AG04450 (cell line): ENCODE measurements at regions of chr16 and their contacts with region 1.

Region 1: GRCh38 chr16:55502801-55503366 is 6.0 kb upstream of the LPCAT2 start:
- DNase-seq: peak; percentile 91
- H3K4me3 ChIP-seq: 0 out of 2 replicates have a peak overlapping the region, but pooled peaks have one; percentile 7
- H3K27ac ChIP-seq: peak overlapping the region; percentile 47
- H3K27me3 ChIP-seq: no peaks in the 10 kb centered on the region
- CTCF ChIP-seq: peak; percentile 30

Region 2: GRCh38 chr16:55454861-55455260 is 48.0 kb before region 1 on chr16:
- CTCF ChIA-PET with region 1: no interaction called
- POLR2A ChIA-PET with region 1: no interaction called
- DNase-seq: no peak
- H3K4me3 ChIP-seq: no peak overlapping the region
- H3K27ac ChIP-seq: no peak overlapping the region
- H3K27me3 ChIP-seq: peaks cover 8% of the 10 kb centered on the region
- CTCF ChIP-seq: no peak

Region 3: DNA sequence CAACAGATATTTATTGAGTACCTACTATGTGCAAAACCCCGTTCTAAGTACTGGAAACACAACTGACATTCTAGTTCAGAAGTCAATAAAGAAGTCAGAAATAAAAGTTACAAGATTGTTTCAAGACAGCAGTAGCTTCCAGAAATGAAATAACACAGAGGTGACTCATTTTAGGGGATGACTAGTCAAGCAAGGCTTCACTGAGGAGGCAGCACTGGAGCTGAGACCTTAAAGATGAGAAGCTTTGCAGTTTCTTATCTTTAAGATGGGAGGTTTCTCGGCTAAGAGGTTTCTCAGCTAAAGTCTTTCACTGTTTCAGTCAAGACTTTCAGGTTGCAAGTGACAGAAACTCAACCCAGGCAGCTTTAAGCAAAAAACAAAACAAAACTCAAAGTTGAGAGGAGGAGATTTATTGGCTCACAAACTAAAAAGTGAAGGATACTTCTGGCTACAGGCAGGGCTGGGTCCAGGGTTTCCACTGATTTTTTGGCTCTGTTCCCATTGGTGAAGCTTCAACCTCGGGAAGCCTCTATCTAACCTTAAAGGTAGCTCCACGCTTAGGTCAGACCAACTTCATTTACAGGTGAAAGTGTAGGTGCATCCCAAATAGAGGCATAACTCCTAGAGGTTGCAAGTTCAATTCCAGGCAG is 31.3 kb before region 1 on chr16:
- CTCF ChIA-PET with region 1: interaction called, 24 read pairs
- POLR2A ChIA-PET with region 1: interaction called, 28 read pairs
- DNase-seq: peak; percentile 51
- H3K4me3 ChIP-seq: no peak overlapping the region
- H3K27ac ChIP-seq: peak overlapping the region; percentile 65
- H3K27me3 ChIP-seq: no peaks in the 10 kb centered on the region
- CTCF ChIP-seq: no peak

Region 4: GRCh38 chr16:55480228-55480661 is 22.6 kb before region 1 on chr16:
- CTCF ChIA-PET with region 1: interaction called, 24 read pairs
- POLR2A ChIA-PET with region 1: interaction called, 59 read pairs
- DNase-seq: peak; percentile 84
- H3K4me3 ChIP-seq: peak overlapping the region; percentile 94
- H3K27ac ChIP-seq: peak overlapping the region; percentile 87
- H3K27me3 ChIP-seq: no peaks in the 10 kb centered on the region
- CTCF ChIP-seq: no peak

Region 5: DNA sequence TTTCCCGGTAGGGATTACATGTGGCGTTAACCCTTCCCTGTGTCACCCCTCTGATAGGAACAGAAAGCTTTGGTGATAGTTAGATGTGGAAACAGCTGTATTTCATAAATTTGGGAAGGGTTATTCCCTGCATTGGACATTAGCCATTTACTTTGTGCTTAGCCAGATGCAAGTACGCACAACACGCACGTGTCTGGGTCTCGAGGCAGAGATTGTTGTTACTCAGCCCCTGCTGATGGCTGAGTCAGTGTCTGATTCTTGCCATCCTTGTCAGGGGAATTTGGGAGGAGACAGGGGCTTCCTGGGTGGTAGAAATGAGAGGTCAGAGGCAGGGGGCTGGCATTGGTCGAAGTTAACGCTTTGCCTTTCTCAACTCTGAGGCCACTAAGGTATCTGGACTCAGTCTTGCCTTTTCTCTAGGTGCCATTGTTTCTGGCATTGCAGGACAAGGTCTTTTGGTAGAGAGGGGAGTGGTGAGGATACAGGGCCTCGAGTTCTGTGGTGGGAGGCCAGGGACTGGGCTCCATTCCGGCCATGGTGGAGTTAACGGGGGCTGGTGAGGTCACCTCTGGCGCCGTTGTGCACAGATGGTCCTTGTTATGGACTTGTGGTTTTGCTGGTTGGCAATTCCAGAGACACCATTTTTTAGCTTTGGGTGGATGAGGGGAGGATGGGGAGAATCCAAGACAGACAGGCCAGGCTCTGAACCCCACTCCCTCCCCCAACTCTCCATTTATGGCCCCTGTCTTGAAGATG is 15.7 kb before region 1 on chr16:
- CTCF ChIA-PET with region 1: interaction called, 11 read pairs
- POLR2A ChIA-PET with region 1: interaction called, 32 read pairs
- DNase-seq: peak; percentile 76
- H3K4me3 ChIP-seq: no peak overlapping the region
- H3K27ac ChIP-seq: peak overlapping the region; percentile 96
- H3K27me3 ChIP-seq: no peaks in the 10 kb centered on the region
- CTCF ChIP-seq: no peak

Region 6: GRCh38 chr16:55543472-55543871 is 40.6 kb after region 1 on chr16:
- CTCF ChIA-PET with region 1: interaction called, 13 read pairs
- POLR2A ChIA-PET with region 1: interaction called, 3 read pairs
- DNase-seq: no peak
- H3K4me3 ChIP-seq: no peak overlapping the region
- H3K27ac ChIP-seq: no peak overlapping the region
- H3K27me3 ChIP-seq: no peaks in the 10 kb centered on the region
- CTCF ChIP-seq: peak; percentile 40